Activated CD4-positive, alpha-beta T cell treated with anti-CD3 and anti-CD28 coated beads for 36 hours (primary cell): ENCODE measurements at regions of chr9 and their contacts with region 1.

Region 1: GRCh38 chr9:91361291-91362050 is at the start of gene AUH:
- DNase-seq: peak; percentile 93
- ATAC-seq: peak; percentile 74
- H3K4me3 Mint-ChIP-seq: peak within 1 kb of the TSS; percentile 87
- H3K27ac Mint-ChIP-seq: peak within 1 kb of the TSS; percentile 86
- H3K4me1 Mint-ChIP-seq: peaks cover 53% of the 10 kb centered on the region
- H3K27me3 Mint-ChIP-seq: no peaks in the 10 kb centered on the region
- total RNA-seq, gene AUH: 30.4 to 30.8 TPM

Region 2: GRCh38 chr9:91047993-91048607 is 313.4 kb before region 1 on chr9:
- CTCF ChIA-PET with region 1: interaction called, 3 read pairs
- POLR2A ChIA-PET with region 1: no interaction called
- intact Hi-C with region 1: loop called (anchors 1 kb)
- DNase-seq: peak; percentile 75
- ATAC-seq: peak; percentile 83
- H3K4me3 Mint-ChIP-seq: peak overlapping the region; percentile 46
- H3K27ac Mint-ChIP-seq: peak overlapping the region; percentile 96
- H3K4me1 Mint-ChIP-seq: peaks cover 82% of the 10 kb centered on the region
- H3K27me3 Mint-ChIP-seq: peaks cover 23% of the 10 kb centered on the region

Region 3: DNA sequence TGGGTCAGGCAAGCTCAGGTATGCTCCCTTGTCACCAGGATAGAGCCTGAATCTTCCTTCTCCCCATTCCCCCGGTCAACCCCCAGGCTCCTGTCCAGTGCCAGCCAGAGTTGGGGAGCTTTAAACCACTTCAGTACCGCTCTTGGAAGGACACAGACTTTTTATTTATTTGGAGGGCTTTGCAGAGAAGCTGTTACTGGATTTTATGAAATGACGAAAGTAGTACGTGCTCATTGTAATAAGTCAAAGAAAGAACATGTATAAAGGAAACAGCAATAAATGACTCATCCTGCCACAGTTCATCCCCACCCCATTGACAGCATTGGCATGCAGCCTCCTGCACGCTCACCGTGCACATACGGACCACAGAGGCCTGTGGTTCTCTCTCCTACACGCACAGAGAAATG is 230.0 kb before region 1 on chr9:
- CTCF ChIA-PET with region 1: no interaction called
- POLR2A ChIA-PET with region 1: interaction called, 5 read pairs
- intact Hi-C with region 1: loop called in 1 of 2 experiments (anchors 1 kb)
- DNase-seq: peak; percentile 91
- ATAC-seq: peak; percentile 98
- H3K4me3 Mint-ChIP-seq: peak overlapping the region; percentile 3
- H3K27ac Mint-ChIP-seq: peak overlapping the region; percentile 94
- H3K4me1 Mint-ChIP-seq: peaks cover 29% of the 10 kb centered on the region
- H3K27me3 Mint-ChIP-seq: no peaks in the 10 kb centered on the region

Region 4: DNA sequence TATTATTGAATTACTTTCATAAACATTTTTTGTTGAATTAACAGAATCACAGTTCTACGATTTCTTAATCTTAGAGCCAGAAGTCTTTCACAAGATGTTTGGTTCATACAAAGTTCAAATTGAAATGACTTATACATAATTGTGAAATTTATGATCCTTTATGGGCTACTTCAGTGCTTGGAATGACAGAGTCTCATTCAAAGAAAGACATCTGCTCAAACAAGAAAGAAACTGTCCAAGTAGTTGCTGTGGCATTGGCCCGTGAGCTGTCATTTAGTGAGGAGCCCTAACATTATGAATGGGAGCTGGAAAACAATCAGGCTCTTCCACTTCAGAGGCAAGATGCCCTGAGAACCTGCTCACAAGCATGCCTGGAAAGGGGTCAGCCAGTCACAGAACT is 63.2 kb before region 1 on chr9:
- CTCF ChIA-PET with region 1: no interaction called
- POLR2A ChIA-PET with region 1: no interaction called
- intact Hi-C with region 1: no loop called
- DNase-seq: no peak
- ATAC-seq: no peak
- H3K4me3 Mint-ChIP-seq: no peak overlapping the region
- H3K27ac Mint-ChIP-seq: no peak overlapping the region
- H3K4me1 Mint-ChIP-seq: peaks cover 5% of the 10 kb centered on the region
- H3K27me3 Mint-ChIP-seq: no peaks in the 10 kb centered on the region

Region 5: DNA sequence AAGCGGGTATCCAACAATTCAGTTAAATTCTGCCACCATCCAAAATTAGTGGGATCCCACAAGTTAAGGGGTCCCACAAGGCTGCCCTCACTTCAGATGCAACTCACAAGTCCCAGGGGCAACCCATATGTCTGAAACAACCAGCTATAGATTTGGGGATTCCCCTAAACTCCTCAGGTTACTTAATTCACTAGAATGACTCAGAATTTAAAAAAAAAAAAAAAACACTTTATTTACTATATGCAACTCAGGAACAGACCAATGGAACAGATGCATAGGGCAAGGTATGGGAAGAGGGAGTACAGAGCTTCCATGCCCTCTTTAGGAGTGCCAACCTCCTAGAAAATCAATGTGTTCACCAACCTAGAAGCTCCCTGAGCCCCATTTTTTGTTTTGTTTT is 14.8 kb before region 1 on chr9:
- CTCF ChIA-PET with region 1: no interaction called
- POLR2A ChIA-PET with region 1: interaction called, 22 read pairs
- intact Hi-C with region 1: loop called (anchors 1 kb)
- DNase-seq: no peak
- ATAC-seq: peak; percentile 65
- H3K4me3 Mint-ChIP-seq: no peak overlapping the region
- H3K27ac Mint-ChIP-seq: peak overlapping the region; percentile 3
- H3K4me1 Mint-ChIP-seq: peaks cover 56% of the 10 kb centered on the region
- H3K27me3 Mint-ChIP-seq: no peaks in the 10 kb centered on the region

Region 6: DNA sequence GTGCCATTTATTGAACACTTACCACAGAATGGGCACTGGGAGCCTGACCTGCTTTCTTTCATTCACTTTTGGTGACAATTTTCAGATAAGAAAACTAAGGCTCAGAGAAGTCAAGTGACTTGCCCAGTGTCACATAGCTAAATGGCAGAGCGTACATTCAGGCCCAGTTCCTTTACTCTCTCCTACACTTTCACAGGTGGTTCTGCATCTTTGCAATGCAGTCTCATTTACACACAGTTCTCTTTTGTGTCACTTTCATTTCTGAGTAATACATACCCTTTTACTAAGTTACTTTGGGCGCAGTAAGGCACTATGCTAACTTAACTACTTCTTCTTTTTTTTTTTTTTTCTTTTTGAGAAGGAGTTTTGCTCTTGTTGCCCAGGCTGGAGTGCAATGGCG is 53.8 kb after region 1 on chr9:
- CTCF ChIA-PET with region 1: interaction called, 5 read pairs
- POLR2A ChIA-PET with region 1: interaction called, 22 read pairs
- intact Hi-C with region 1: loop called (anchors 1 kb)
- DNase-seq: peak; percentile 49
- ATAC-seq: peak; percentile 78
- H3K4me3 Mint-ChIP-seq: peak overlapping the region; percentile 41
- H3K27ac Mint-ChIP-seq: peak overlapping the region; percentile 96
- H3K4me1 Mint-ChIP-seq: peaks cover 85% of the 10 kb centered on the region
- H3K27me3 Mint-ChIP-seq: no peaks in the 10 kb centered on the region